ENCODE measurements at regions of chr3 and their contacts with region 1.

Region 1: GRCh38 chr3:156554842-156555687 is at the start of gene SSR3:
- DNase-seq: peak; percentile 100
- ATAC-seq: peak; percentile 99 to 100 (median 99)
- H3K4me3 ChIP-seq: peak within 1 kb of the TSS; percentile 81 to 98 (median 90)
- H3K27ac ChIP-seq: peak within 1 kb of the TSS; percentile 84 to 98 (median 93)
- H3K4me1 ChIP-seq: peaks cover 8 to 62% (median 41%) of the 10 kb centered on the region in 12 donors
- H3K27me3 ChIP-seq: no peaks in the 10 kb centered on the region
- CTCF ChIP-seq: peak in 9 of 12 donors; percentile 11 to 41 (median 19)
- POLR2A ChIP-seq: peak; percentile 56 to 90
- total RNA-seq, gene SSR3: 171 to 456 (median 197) TPM

Region 2: DNA sequence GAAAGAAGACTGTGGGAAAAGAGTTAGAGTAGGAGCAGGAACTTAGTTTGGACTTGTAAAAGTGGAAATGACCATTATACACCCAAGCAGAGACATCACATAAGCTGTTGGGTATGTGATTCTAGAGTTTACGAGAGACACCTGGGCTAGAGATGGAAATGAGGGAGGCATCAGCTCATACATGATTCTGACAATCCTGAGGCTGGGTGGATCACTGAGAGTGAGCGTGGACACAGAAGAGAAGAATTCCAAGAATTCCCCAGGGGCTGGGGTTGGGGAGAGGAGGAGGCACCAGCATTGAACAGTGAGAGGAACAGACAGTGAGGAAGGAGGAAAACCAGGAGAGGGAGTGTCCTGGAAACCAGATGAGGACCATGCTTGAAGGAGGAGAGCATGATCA is 321.2 kb before region 1 on chr3:
- intact Hi-C with region 1: no loop called
- DNase-seq: no peak
- ATAC-seq: no peak
- H3K4me3 ChIP-seq: no peak overlapping the region
- H3K27ac ChIP-seq: no peak overlapping the region
- H3K4me1 ChIP-seq: no peaks in the 10 kb centered on the region
- H3K27me3 ChIP-seq: no peaks in the 10 kb centered on the region
- CTCF ChIP-seq: no peak
- POLR2A ChIP-seq: no peak

Region 3: GRCh38 chr3:156582784-156583183 is 27.7 kb after region 1 on chr3:
- intact Hi-C with region 1: loop called in 1 of 10 experiments (anchors 1 kb)
- DNase-seq: no peak
- ATAC-seq: no peak
- H3K4me3 ChIP-seq: no peak overlapping the region
- H3K27ac ChIP-seq: no peak overlapping the region
- H3K4me1 ChIP-seq: peaks cover 0 to 40% (median 6%) of the 10 kb centered on the region in 12 donors
- H3K27me3 ChIP-seq: no peaks in the 10 kb centered on the region
- CTCF ChIP-seq: no peak
- POLR2A ChIP-seq: no peak

Region 4: GRCh38 chr3:156605686-156606605 is 50.9 kb after region 1 on chr3:
- intact Hi-C with region 1: loop called in 2 of 10 experiments (anchors 5 to 10 kb)
- DNase-seq: peak; percentile 35 to 73 (median 63)
- ATAC-seq: peak; percentile 79 to 91 (median 87)
- H3K4me3 ChIP-seq: peak overlapping the region in 10 of 12 donors; percentile 9 to 59 (median 49)
- H3K27ac ChIP-seq: peak overlapping the region; percentile 20 to 86 (median 72)
- H3K4me1 ChIP-seq: peaks cover 0 to 24% (median 5%) of the 10 kb centered on the region in 12 donors
- H3K27me3 ChIP-seq: no peaks in the 10 kb centered on the region
- CTCF ChIP-seq: no peak
- POLR2A ChIP-seq: no peak

Region 5: GRCh38 chr3:156674046-156674910 is 119.2 kb after region 1 on chr3 and contains the start of gene TIPARP:
- intact Hi-C with region 1: loop called in 9 of 10 experiments (anchors 1 to 5 kb)
- DNase-seq: peak; percentile 99 to 100 (median 100)
- ATAC-seq: peak; percentile 92 to 98 (median 96)
- H3K4me3 ChIP-seq: peak within 1 kb of the TSS; percentile 66 to 97 (median 80)
- H3K27ac ChIP-seq: peak within 1 kb of the TSS; percentile 88 to 99 (median 96)
- H3K4me1 ChIP-seq: peaks cover 0 to 51% (median 29%) of the 10 kb centered on the region in 12 donors
- H3K27me3 ChIP-seq: no peaks in the 10 kb centered on the region
- CTCF ChIP-seq: peak; percentile 55 to 88 (median 77)
- POLR2A ChIP-seq: peak; percentile 81 to 99
- total RNA-seq, gene TIPARP: 17.8 to 46.8 (median 33.8) TPM

Region 6: GRCh38 chr3:156816800-156817645 is 262.0 kb after region 1 on chr3:
- intact Hi-C with region 1: loop called in 3 of 10 experiments (anchors 5 to 10 kb)
- DNase-seq: peak; percentile 82 to 93 (median 88)
- ATAC-seq: peak; percentile 83 to 94 (median 90)
- H3K4me3 ChIP-seq: peak overlapping the region; percentile 40 to 76 (median 66)
- H3K27ac ChIP-seq: peak overlapping the region; percentile 51 to 93 (median 84)
- H3K4me1 ChIP-seq: peaks cover 0 to 32% (median 12%) of the 10 kb centered on the region in 12 donors
- H3K27me3 ChIP-seq: no peaks in the 10 kb centered on the region
- CTCF ChIP-seq: peak in 3 of 12 donors; percentile 23 to 31 (median 25)
- POLR2A ChIP-seq: peak in 1 of 2 donors; percentile 58

Region 7: DNA sequence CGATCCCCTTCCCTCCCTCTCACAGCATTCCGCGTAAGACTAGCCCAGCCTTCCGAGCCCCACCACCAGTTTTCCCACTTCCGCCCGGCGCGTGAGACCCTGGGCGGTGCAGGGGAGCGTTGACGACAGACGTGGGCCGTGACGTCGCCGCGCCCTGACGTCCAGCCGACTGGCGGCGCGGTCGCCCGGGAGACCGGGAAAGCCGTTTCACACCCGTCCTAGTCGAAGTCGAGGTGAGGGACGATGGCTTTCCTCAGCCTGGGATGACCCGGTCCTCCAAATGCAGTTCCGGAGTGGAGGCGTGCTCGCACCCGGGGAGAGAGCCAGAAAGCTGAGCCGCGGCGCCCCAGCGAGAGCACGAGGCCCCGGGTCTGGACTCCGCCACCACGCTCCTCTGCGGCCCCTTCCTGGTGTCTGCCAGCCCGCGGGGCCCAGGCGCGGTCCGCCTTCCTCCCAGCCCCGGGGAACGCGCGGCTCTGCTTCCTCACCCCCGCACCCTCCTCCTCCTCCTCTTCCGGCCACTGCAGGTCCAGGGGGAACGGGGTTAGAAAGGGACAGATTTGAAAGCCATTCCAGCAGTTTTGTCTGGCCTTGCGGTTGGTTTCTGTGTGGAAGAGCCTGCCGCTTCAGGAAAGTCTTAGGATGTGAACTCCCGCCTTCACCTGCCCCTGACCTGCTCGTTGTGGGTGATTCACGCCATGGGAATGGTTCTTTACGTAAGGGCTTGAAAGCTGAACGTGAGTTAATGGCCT is 271.3 kb after region 1 on chr3 and contains the start of gene LEKR1:
- intact Hi-C with region 1: loop called in 4 of 10 experiments (anchors 5 to 10 kb)
- DNase-seq: peak; percentile 89 to 93 (median 91)
- ATAC-seq: peak; percentile 85 to 98 (median 96)
- H3K4me3 ChIP-seq: peak within 1 kb of the TSS; percentile 56 to 94 (median 67)
- H3K27ac ChIP-seq: peak within 1 kb of the TSS; percentile 83 to 96 (median 89)
- H3K4me1 ChIP-seq: peaks cover 0 to 17% (median 6%) of the 10 kb centered on the region in 12 donors
- H3K27me3 ChIP-seq: no peaks in the 10 kb centered on the region
- CTCF ChIP-seq: peak in 1 of 12 donors; percentile 4
- POLR2A ChIP-seq: peak; percentile 14 to 72
- total RNA-seq, gene LEKR1: 0.23 to 1.8 (median 1.0) TPM in 8 of 9 donors, not detected in the other

Measured in heart left ventricle (tissue), 16 donors.